ENCODE measurements at regions of chr3 and their contacts with region 1.

Region 1: DNA sequence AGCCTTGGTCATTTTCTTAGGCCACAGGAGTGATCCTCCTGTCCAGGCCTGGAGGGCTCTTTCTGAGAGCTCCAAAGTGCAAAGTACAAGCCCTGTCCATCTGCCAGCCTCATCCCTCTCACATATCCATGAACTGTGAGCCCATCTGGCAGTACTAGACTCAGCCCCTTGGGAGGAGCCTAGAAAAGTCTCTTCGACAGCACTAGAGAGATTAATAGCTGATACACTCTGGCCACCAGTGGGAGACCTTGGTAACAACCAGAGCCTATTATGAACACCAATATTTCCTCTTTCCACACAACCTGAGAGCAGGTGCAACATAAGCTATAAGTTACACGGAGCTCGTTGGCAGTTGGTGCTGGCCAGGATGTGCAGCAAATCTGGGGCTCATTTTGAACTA is 59.5 kb upstream of the DCLK3 start:
- DNase-seq: no peak
- H3K4me3 ChIP-seq: no peak overlapping the region
- CTCF ChIP-seq: no peak
- POLR2A ChIP-seq: no peak

Region 2: GRCh38 chr3:34882764-34883163 is 1941.0 kb before region 1 on chr3:
- intact Hi-C with region 1: loop called (anchors 5 kb)
- DNase-seq: no peak
- H3K4me3 ChIP-seq: no peak overlapping the region
- CTCF ChIP-seq: no peak
- POLR2A ChIP-seq: no peak

Region 3: DNA sequence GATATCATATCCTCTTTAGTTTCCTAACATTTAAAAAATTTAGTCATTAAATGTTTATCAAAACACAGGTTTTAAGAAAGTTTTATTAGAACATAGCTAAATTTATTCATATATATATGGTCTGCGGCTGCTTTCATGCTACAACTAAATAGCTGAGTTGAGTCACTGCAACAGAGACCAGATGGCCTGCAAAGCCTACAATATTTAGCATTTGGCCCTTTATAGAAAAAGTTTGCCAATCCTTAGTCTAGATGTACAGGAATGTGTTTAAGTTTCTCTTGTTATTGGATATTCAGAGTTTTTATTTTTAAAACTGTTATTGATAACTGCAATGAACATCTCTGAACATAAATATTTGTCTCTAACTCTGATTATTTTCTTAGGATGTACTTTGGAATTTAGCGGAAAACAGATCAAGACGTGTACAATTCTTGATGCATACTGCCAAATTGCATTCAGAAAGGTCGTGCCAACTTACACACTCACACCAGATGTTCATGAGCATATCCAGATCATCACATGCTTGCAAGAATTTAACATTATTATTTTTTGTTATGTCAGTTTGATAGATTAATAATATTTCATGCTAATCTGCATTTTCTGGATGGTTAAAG is 285.6 kb before region 1 on chr3:
- intact Hi-C with region 1: no loop called
- DNase-seq: no peak
- H3K4me3 ChIP-seq: no peak overlapping the region
- CTCF ChIP-seq: no peak
- POLR2A ChIP-seq: no peak

Region 4: GRCh38 chr3:37519661-37520060 is 695.9 kb after region 1 on chr3:
- intact Hi-C with region 1: loop called (anchors 5 kb)
- DNase-seq: no peak
- H3K4me3 ChIP-seq: no peak overlapping the region
- CTCF ChIP-seq: no peak
- POLR2A ChIP-seq: no peak